HCT116 (cell line): ENCODE measurements at regions of chr11 and their contacts with region 1.

Region 1: GRCh38 chr11:45110562-45110961 is 35.9 kb upstream of the PRDM11 start:
- DNase-seq: peak; percentile 64
- ATAC-seq: peak; percentile 90
- H3K4me3 ChIP-seq: no peak overlapping the region
- H3K27ac ChIP-seq: no peak overlapping the region
- H3K4me1 ChIP-seq: peaks cover 0 to 14% of the 10 kb centered on the region in 2 experiments; a peak in 2 of 4 replicates
- H3K27me3 ChIP-seq: no peaks in the 10 kb centered on the region
- CTCF ChIP-seq: peak; percentile 59 to 91 (median 76); a peak in 5 of 6 replicates
- POLR2A ChIP-seq: no peak
- RAD21 ChIP-seq: peak; percentile 92

Region 2: GRCh38 chr11:44936525-44936924 is 174.0 kb before region 1 on chr11:
- CTCF ChIA-PET with region 1: interaction called, 236 read pairs
- POLR2A ChIA-PET with region 1: interaction called, 4 read pairs
- RAD21 ChIA-PET with region 1: interaction called, 11 to 26 read pairs
- intact Hi-C with region 1: no loop called
- DNase-seq: peak; percentile 55
- ATAC-seq: peak; percentile 89
- H3K4me3 ChIP-seq: no peak overlapping the region
- H3K27ac ChIP-seq: no peak overlapping the region
- H3K4me1 ChIP-seq: no peaks in the 10 kb centered on the region
- H3K27me3 ChIP-seq: no peaks in the 10 kb centered on the region
- CTCF ChIP-seq: peak; percentile 92 to 95 (median 93)
- POLR2A ChIP-seq: no peak
- RAD21 ChIP-seq: peak; percentile 94

Region 3: DNA sequence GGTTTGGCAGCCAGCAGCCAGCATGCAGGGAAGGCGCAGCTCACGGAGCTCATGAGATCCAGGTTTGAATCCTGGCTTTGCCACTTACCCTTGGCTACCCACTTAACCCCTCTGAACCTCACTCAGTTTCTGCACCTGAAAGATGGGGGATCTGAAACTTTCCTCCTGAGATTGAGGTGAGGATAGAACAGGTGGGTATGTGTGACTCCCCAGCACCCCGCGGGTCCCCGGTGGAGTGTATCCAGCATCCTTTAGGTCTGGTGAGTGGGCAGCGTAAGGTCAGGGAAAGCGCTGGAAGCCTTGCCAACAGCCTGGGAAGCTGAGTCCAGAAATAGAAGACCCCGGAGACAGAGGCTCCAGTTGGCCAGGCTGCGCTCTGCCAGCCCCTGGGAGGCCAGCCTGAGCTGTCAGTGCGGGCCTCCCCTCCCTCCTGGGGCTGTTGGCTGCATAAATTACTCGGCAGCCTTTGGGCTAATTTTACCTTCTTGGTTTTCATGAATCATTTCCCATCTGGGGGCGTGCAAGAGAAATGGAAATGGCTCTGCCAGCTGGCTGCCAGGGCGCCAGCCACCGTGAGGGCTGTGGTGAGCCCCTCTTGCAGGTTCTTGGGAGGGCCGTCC is 53.5 kb after region 1 on chr11:
- CTCF ChIA-PET with region 1: no interaction called
- POLR2A ChIA-PET with region 1: no interaction called
- RAD21 ChIA-PET with region 1: no interaction called
- intact Hi-C with region 1: no loop called
- DNase-seq: no peak
- ATAC-seq: no peak
- H3K4me3 ChIP-seq: no peak overlapping the region
- H3K27ac ChIP-seq: no peak overlapping the region
- H3K4me1 ChIP-seq: peaks cover 0 to 9% of the 10 kb centered on the region in 2 experiments; a peak in 1 of 4 replicates
- H3K27me3 ChIP-seq: no peaks in the 10 kb centered on the region
- CTCF ChIP-seq: no peak
- POLR2A ChIP-seq: no peak
- RAD21 ChIP-seq: no peak

Region 4: DNA sequence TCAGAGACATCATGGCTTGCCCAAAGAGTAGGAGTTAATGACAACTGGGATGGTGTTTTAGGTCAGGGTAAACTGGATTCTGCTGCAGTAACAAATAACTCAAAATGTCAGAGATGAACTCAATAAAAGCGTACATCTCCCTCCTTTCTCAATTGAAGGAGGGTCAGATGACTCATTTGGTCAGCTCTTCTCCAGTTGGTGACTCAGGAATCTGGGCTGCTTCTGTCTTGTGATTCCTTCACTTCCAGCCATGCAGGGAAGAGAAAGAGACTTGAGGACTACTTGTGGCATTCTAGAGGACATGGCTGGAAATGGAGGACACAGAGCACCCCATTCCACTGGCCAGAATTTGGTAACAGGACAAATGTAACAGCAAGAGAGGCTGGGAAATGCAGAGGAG is 178.8 kb after region 1 on chr11:
- CTCF ChIA-PET with region 1: interaction called, 25 read pairs
- POLR2A ChIA-PET with region 1: no interaction called
- RAD21 ChIA-PET with region 1: interaction called, 3 to 4 read pairs
- intact Hi-C with region 1: loop called (anchors 1 kb)
- DNase-seq: no peak
- ATAC-seq: no peak
- H3K4me3 ChIP-seq: no peak overlapping the region
- H3K27ac ChIP-seq: no peak overlapping the region
- H3K4me1 ChIP-seq: peaks cover 0 to 6% of the 10 kb centered on the region in 2 experiments; a peak in 2 of 4 replicates
- H3K27me3 ChIP-seq: no peaks in the 10 kb centered on the region
- CTCF ChIP-seq: no peak
- POLR2A ChIP-seq: no peak
- RAD21 ChIP-seq: no peak

Region 5: DNA sequence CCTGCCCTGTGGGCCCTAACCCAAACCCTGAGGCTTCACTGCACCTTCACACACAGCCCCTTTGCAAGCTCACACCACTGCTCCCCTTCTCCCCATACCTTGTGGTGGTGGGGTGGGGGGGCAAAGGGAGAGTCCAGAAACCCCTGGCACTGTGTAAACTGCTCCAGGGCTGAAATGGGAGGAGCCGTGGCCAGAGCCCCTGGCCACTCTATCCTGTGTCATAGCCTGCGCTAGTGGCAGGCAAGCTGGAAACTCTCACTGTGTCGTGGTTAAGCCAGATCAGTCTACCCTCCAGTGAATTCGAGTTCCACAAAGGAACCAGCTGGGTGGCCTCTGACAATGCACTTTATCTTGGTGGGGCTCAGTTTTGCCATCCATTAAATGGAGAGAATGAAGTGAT is 183.9 kb after region 1 on chr11:
- CTCF ChIA-PET with region 1: interaction called, 25 read pairs
- POLR2A ChIA-PET with region 1: no interaction called
- RAD21 ChIA-PET with region 1: interaction called, 3 to 4 read pairs
- intact Hi-C with region 1: loop called (anchors 1 kb)
- DNase-seq: no peak
- ATAC-seq: no peak
- H3K4me3 ChIP-seq: no peak overlapping the region
- H3K27ac ChIP-seq: no peak overlapping the region
- H3K4me1 ChIP-seq: peaks cover 0 to 2% of the 10 kb centered on the region in 2 experiments; a peak in 2 of 4 replicates
- H3K27me3 ChIP-seq: no peaks in the 10 kb centered on the region
- CTCF ChIP-seq: no peak
- POLR2A ChIP-seq: no peak
- RAD21 ChIP-seq: no peak

Region 6: GRCh38 chr11:45332276-45332934 is 221.8 kb after region 1 on chr11:
- CTCF ChIA-PET with region 1: interaction called, 52 read pairs
- POLR2A ChIA-PET with region 1: no interaction called
- RAD21 ChIA-PET with region 1: interaction called, 3 to 11 read pairs
- intact Hi-C with region 1: loop called (anchors 1 kb)
- DNase-seq: peak; percentile 29
- ATAC-seq: peak; percentile 75
- H3K4me3 ChIP-seq: no peak overlapping the region
- H3K27ac ChIP-seq: no peak overlapping the region
- H3K4me1 ChIP-seq: peaks cover 6 to 16% of the 10 kb centered on the region in 2 experiments; a peak in 3 of 4 replicates
- H3K27me3 ChIP-seq: no peaks in the 10 kb centered on the region
- CTCF ChIP-seq: peak; percentile 45 to 60 (median 56); a peak in 5 of 6 replicates
- POLR2A ChIP-seq: no peak
- RAD21 ChIP-seq: peak; percentile 75